Activated naive CD4-positive, alpha-beta T cell treated with anti-CD3 and anti-CD28 coated beads for 36 hours (primary cell): ENCODE measurements at regions of chr1 and their contacts with region 1.

Region 1: DNA sequence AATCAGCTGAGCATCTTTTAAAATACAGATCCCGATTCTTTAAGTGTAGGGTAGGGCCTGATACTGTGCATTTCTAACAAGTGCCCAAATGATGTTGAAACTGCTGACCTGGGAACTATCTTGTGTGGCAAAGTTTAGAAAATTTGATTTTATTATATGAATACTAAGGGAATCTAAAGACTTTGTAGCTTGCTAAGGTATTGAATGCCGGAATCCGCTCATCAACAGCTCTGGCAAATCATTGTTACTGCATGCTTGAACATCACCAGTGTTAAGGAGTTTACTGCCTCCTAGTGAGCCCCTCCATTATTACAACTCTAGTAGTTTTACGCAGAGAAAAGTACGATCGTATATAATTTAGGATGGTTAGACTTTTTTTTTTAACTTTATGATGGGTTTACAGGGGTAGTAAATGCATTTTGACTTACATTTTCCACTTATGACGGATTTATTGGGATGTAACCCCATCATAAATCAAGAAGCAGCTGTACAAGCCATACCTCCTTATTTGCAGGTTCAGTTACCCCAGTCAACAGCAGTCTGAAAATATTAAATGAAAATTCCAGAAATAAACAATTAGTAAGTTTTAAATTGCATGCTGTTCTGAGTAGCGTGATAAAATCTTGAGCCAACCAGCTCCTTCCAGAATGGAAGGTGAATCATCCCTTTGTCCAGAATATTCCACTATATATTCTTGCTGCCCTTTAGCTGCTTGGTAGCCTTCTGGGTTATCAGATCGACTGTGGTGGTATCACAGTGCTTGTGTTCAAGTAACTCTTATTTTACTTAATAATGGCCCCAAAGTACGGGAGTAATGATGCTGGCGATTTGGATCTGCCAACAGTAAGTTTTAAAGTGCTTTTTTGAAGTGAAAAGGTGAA is 892 bp downstream of the TYW3 start:
- DNase-seq: peak; percentile 49
- H3K4me3 Mint-ChIP-seq: peak overlapping the region; percentile 89
- H3K27ac Mint-ChIP-seq: peak overlapping the region; percentile 94
- H3K4me1 Mint-ChIP-seq: peaks cover 37% of the 10 kb centered on the region
- H3K27me3 Mint-ChIP-seq: no peaks in the 10 kb centered on the region

Region 2: DNA sequence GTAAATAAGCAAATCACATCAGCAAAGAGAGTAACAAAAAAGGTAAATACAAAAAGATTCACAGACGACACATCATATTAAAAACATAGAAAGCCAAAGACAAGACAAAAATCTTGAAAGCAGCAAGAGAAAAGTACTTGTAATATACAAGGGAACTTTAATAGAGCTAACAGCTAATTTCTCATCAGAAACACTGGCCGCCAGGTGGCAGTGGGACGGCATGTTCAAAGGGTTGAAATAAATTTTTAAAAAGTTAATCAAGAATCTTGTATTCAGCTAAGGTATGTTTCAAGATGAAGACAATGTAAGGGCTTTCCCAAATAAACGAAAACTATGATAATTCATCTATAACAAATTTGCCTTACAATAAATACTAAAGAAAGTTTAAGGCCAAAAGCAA is 893.9 kb before region 1 on chr1:
- CTCF ChIA-PET with region 1: no interaction called
- intact Hi-C with region 1: loop called (anchors 1 kb)
- DNase-seq: peak; percentile 26
- H3K4me3 Mint-ChIP-seq: no peak overlapping the region
- H3K27ac Mint-ChIP-seq: no peak overlapping the region
- H3K4me1 Mint-ChIP-seq: no peaks in the 10 kb centered on the region
- H3K27me3 Mint-ChIP-seq: no peaks in the 10 kb centered on the region

Region 3: GRCh38 chr1:74197657-74198552 is 535.9 kb before region 1 on chr1 and contains the starts of genes FPGT and LRRIQ3:
- CTCF ChIA-PET with region 1: no interaction called
- intact Hi-C with region 1: loop called (anchors 1 kb)
- DNase-seq: peak; percentile 95
- H3K4me3 Mint-ChIP-seq: peak within 1 kb of the TSS; percentile 89
- H3K27ac Mint-ChIP-seq: peak within 1 kb of the TSS; percentile 92
- H3K4me1 Mint-ChIP-seq: peaks cover 17% of the 10 kb centered on the region
- H3K27me3 Mint-ChIP-seq: no peaks in the 10 kb centered on the region
- total RNA-seq, gene FPGT: 11.0 to 13.9 TPM
- total RNA-seq, gene LRRIQ3: 1.1 to 1.2 TPM

Region 4: DNA sequence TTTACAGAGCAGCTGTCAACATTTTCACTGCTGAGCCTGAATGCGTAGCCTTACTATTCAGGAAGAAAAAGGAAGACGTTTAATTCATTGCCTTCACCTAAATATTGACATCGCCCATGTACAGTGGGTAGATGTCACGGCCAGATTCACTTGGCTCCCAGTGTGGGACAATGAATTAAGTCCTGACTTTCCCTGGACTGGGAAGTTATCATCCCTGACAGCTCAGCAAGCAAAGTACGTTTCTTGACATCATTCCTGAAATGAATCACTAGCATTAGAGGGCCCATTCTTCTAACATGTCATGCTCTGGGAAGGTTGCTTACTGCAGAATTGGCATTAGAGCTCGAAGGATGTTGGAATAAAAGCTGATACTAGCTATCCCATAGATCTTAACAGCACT is 259.3 kb before region 1 on chr1:
- CTCF ChIA-PET with region 1: no interaction called
- intact Hi-C with region 1: no loop called
- DNase-seq: no peak
- H3K4me3 Mint-ChIP-seq: no peak overlapping the region
- H3K27ac Mint-ChIP-seq: no peak overlapping the region
- H3K4me1 Mint-ChIP-seq: no peaks in the 10 kb centered on the region
- H3K27me3 Mint-ChIP-seq: peaks cover 3% of the 10 kb centered on the region

Region 5: GRCh38 chr1:74504125-74504932 is 229.5 kb before region 1 on chr1:
- CTCF ChIA-PET with region 1: no interaction called
- intact Hi-C with region 1: loop called (anchors 1 kb)
- DNase-seq: peak; percentile 67
- H3K4me3 Mint-ChIP-seq: no peak overlapping the region
- H3K27ac Mint-ChIP-seq: no peak overlapping the region
- H3K4me1 Mint-ChIP-seq: no peaks in the 10 kb centered on the region
- H3K27me3 Mint-ChIP-seq: peaks cover 8% of the 10 kb centered on the region

Region 6: GRCh38 chr1:74689621-74690363 is 44.1 kb before region 1 on chr1:
- CTCF ChIA-PET with region 1: interaction called, 25 read pairs
- intact Hi-C with region 1: loop called (anchors 1 kb)
- DNase-seq: peak; percentile 58
- H3K4me3 Mint-ChIP-seq: no peak overlapping the region
- H3K27ac Mint-ChIP-seq: no peak overlapping the region
- H3K4me1 Mint-ChIP-seq: peaks cover 2% of the 10 kb centered on the region
- H3K27me3 Mint-ChIP-seq: peaks cover 2% of the 10 kb centered on the region

Region 7: GRCh38 chr1:74763807-74764206 is 30.0 kb after region 1 on chr1:
- CTCF ChIA-PET with region 1: interaction called, 5 read pairs
- intact Hi-C with region 1: loop called (anchors 1 kb)
- DNase-seq: no peak
- H3K4me3 Mint-ChIP-seq: no peak overlapping the region
- H3K27ac Mint-ChIP-seq: peak overlapping the region; percentile 47
- H3K4me1 Mint-ChIP-seq: peaks cover 18% of the 10 kb centered on the region
- H3K27me3 Mint-ChIP-seq: no peaks in the 10 kb centered on the region

Region 8: GRCh38 chr1:75724472-75725022 is 990.7 kb after region 1 on chr1 and contains the start of gene ACADM:
- CTCF ChIA-PET with region 1: no interaction called
- intact Hi-C with region 1: loop called (anchors 10 kb)
- DNase-seq: peak; percentile 86
- H3K4me3 Mint-ChIP-seq: peak within 1 kb of the TSS; percentile 100
- H3K27ac Mint-ChIP-seq: peak within 1 kb of the TSS; percentile 97
- H3K4me1 Mint-ChIP-seq: peaks cover 37% of the 10 kb centered on the region
- H3K27me3 Mint-ChIP-seq: no peaks in the 10 kb centered on the region
- total RNA-seq, gene ACADM: 37.1 to 38.5 TPM